Posterior vena cava (tissue), 2 donors: ENCODE measurements at regions of chr20 and their contacts with region 1.

Region 1: DNA sequence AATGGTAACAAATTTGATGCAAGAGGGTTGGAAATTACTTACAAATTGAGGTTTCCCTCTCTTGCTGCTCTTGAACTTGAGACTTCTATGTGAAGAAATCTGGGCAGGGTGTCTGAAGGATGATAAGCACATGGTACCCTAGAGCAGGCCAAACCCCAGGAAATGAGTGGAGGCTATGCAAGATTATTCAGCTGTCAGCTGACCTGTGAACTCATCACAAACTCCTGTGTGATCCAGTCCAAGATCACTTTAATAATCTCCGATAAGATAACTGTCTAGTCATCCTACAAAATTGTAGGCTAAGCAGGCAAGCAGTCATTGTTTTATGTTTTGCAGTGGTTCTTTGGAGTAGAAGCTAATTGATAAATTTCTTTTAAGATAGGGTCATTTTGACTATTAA is 213.1 kb downstream of the BTBD3 start:
- DNase-seq: no peak

Region 2: GRCh38 chr20:10679269-10679668 is 1451.5 kb before region 1 on chr20:
- intact Hi-C with region 1: no loop called
- DNase-seq: no peak

Region 3: DNA sequence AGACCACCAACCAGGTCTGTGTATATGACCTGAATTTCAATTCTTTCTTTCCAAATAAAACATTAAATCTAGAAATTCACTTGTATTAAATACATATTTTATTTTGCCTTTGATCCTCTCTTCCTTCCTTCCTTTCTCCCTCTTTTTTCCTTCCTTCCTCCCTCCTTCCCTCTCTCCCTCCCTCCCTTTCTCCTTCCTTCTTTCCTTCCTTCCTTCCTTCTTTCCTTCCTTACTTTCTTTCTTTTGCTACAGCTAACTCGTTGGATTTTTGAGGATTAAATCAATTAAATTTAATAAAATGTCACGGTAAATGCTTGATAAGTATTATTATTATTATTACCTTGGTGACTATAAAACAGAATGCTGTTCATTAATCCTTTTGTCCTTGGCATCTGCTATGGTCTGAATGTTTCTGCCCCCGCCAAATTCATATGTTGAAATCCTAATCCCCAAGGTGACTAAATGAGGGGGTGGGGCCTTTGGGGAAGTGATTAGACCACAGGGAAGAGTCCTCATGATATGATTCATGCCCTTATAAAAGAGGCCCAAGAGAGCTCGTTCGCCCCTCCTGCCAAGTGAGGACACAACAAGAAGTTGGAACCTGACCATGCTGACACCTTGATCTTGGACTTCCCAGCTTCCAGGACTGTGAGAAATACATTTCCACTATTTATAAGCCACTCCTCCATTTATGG is 280.7 kb before region 1 on chr20:
- intact Hi-C with region 1: loop called in 1 of 2 experiments (anchors 5 kb)
- DNase-seq: no peak

Region 4: GRCh38 chr20:12199703-12200102 is 68.9 kb after region 1 on chr20:
- intact Hi-C with region 1: no loop called
- DNase-seq: no peak